Vagina (tissue), 2 donors: ENCODE measurements at regions of chr12 and their contacts with region 1.

Region 1: DNA sequence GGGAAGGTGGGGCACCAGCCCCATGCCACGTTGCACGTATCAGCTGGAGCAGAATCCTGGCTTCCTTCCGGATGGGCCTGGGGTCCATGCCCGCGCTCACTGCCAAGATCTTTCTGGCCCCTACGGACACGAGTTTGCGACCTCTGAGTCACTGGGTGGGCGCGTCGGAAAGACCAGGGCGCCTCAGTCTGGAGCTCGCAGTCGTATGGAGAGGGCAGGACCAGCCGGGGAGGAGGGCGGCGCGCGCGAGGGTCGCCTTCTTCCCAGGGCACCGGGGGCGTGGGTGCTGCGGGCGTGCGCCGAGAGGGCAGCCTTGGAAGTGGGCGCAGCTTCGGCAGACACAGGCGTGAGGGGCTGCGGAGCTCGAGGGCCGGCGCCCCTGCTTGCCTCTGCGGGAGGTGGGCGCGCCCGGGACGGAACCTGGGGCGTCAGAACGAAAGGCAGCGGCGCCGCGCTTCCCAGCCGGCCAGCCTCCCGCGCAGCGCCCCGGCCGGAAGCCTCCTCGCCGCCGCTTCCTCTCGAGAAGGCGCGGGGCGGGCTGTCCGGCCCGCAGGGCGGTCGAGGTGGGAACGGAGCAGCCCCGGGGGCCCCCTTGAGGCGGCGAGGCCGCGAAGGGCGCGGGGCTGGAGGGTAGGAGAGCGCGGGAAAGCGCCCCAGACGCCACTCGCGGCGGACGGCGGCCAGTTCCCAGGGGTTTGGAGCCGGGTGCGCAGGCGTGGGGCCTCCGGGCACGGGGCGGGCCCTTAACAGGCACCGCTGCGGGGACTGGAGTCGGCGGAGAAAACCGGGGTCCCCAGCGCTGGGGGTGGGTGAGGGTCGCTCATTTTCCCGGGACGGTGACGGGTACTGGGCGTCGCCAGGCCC is at the start of gene ARL6IP4:
- DNase-seq: no peak
- H3K4me3 ChIP-seq: peak within 1 kb of the TSS; percentile 81 to 93
- H3K27ac ChIP-seq: peak within 1 kb of the TSS; percentile 83
- H3K4me1 ChIP-seq: peaks cover 92% of the 10 kb centered on the region
- H3K27me3 ChIP-seq: no peaks in the 10 kb centered on the region
- CTCF ChIP-seq: no peak
- POLR2A ChIP-seq: peak in 1 of 2 donors; percentile 76
- total RNA-seq, gene ARL6IP4: 147 TPM

Region 2: DNA sequence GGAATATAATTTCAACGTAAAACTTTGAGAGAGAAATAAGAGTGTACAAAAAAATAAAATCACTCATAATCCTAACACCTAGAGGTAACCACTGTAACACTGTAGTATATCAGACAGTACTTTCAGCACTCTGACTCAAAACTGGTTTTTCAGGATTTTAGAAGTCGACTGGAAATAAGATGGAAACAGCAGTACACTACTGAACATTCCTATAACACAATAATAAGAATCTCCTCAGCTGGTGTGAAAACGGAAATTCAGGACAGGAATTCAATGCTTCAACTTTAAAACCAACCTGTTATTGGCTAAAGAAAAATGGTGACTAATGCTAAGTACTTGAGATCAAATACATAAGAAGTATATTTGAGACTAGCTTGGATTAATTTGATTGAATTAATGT is 182.8 kb after region 1 on chr12:
- intact Hi-C with region 1: loop called (anchors 5 kb)
- DNase-seq: no peak
- H3K4me3 ChIP-seq: no peak overlapping the region
- H3K27ac ChIP-seq: no peak overlapping the region
- H3K4me1 ChIP-seq: no peaks in the 10 kb centered on the region
- H3K27me3 ChIP-seq: no peaks in the 10 kb centered on the region
- CTCF ChIP-seq: no peak
- POLR2A ChIP-seq: no peak

Region 3: GRCh38 chr12:123232807-123233543 is 252.6 kb after region 1 on chr12 and contains the starts of genes MPHOSPH9 and MTRFR:
- intact Hi-C with region 1: loop called (anchors 5 kb)
- DNase-seq: peak; percentile 99 to 100
- H3K4me3 ChIP-seq: peak within 1 kb of the TSS; percentile 85 to 99
- H3K27ac ChIP-seq: peak within 1 kb of the TSS; percentile 94
- H3K4me1 ChIP-seq: peaks cover 46% of the 10 kb centered on the region
- H3K27me3 ChIP-seq: no peaks in the 10 kb centered on the region
- CTCF ChIP-seq: peak in 1 of 3 experiments; percentile 12
- POLR2A ChIP-seq: peak; percentile 67 to 95
- total RNA-seq, gene MPHOSPH9: 17.9 TPM
- total RNA-seq, gene MTRFR: 12.8 TPM

Region 4: DNA sequence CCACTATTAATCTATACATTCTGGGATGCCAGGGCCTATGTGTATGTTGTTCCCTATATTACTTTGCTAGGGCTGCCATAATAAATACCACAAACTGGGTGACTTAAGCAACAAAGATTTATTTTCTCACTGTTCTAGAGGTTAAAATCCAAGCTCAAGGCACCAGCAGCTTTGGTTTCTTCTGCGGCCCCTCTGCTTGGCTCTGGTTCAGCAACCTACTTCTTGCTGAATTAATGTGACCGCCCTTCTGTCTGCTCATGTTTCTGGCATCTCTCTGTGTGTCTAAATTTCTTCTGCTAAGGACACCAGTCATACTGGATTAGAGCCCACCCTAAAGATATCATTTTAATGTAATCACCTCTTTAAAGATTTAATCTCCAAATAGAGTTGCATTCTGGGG is 1077.3 kb after region 1 on chr12:
- intact Hi-C with region 1: no loop called
- DNase-seq: no peak
- H3K4me3 ChIP-seq: no peak overlapping the region
- H3K27ac ChIP-seq: no peak overlapping the region
- H3K4me1 ChIP-seq: no peaks in the 10 kb centered on the region
- H3K27me3 ChIP-seq: no peaks in the 10 kb centered on the region
- CTCF ChIP-seq: no peak
- POLR2A ChIP-seq: no peak